ENCODE measurements at regions of chr13 and their contacts with region 1.

Region 1: GRCh38 chr13:23674795-23675640 is 104.8 kb downstream of the TNFRSF19 start:
- DNase-seq: peak; percentile 19
- H3K4me3 Mint-ChIP-seq: no peak overlapping the region
- H3K27ac Mint-ChIP-seq: no peak overlapping the region
- H3K4me1 Mint-ChIP-seq: peaks cover 9% of the 10 kb centered on the region
- H3K27me3 Mint-ChIP-seq: peaks cover 7% of the 10 kb centered on the region

Region 2: GRCh38 chr13:23656637-23657371 is 18.2 kb before region 1 on chr13:
- CTCF ChIA-PET with region 1: no interaction called
- intact Hi-C with region 1: no loop called
- DNase-seq: no peak
- H3K4me3 Mint-ChIP-seq: no peak overlapping the region
- H3K27ac Mint-ChIP-seq: no peak overlapping the region
- H3K4me1 Mint-ChIP-seq: no peaks in the 10 kb centered on the region
- H3K27me3 Mint-ChIP-seq: peaks cover 8% of the 10 kb centered on the region

Region 3: GRCh38 chr13:23794267-23795161 is 119.5 kb after region 1 on chr13:
- CTCF ChIA-PET with region 1: no interaction called
- intact Hi-C with region 1: loop called (anchors 5 kb)
- DNase-seq: no peak
- H3K4me3 Mint-ChIP-seq: no peak overlapping the region
- H3K27ac Mint-ChIP-seq: no peak overlapping the region
- H3K4me1 Mint-ChIP-seq: peaks cover 10% of the 10 kb centered on the region
- H3K27me3 Mint-ChIP-seq: no peaks in the 10 kb centered on the region

Measured in activated naive CD4-positive, alpha-beta T cell treated with anti-CD3 and anti-CD28 coated beads for 36 hours (primary cell).